PC-9 (cell line): ENCODE measurements at regions of chr19 and their contacts with region 1.

Region 1: DNA sequence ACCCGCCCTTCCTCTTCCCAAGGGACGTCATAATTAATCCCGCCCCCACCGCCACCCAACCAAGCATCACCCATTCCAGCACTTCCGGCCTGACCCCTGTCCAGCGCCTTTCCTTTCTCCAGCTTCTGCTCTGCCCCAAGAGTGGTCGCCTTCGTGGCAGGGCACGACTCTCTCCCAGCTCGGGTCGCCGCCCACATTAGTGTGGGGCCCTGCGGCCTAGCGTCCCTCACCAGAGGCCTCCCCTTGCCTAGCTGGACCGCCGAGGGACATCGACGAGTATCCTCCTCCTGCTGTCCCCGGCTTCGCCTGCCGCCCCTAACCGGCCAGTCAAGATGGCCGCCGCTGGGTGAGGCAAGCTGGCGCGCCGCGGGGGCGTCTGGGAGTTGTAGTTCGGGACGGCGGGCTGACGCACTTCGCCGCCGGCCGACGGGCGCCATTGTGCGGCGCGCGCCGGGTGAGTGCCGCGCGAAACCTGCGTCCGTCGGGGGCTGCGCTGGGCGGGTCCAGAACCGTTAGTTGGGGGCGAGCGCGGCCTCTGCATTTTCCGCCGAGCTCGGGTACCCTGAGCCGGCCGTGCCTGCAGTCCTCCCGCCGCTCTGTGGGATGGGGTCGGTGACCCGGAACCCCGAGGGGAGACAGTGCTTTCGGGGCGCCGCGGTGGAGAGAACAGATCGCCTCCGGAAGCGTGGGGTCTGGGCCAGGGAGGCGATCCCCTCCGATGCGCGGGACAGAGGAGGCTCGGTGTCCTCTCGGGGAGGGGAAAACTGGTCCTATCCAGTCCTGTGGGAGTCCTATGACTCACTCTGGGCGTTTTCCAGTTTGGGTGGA is at the start of gene ZNF274:
- DNase-seq: peak; percentile 91 to 98
- H3K4me3 ChIP-seq: peak within 1 kb of the TSS; percentile 80
- H3K27ac ChIP-seq: peak within 1 kb of the TSS; percentile 95
- H3K4me1 ChIP-seq: peaks cover 4% of the 10 kb centered on the region; the same call in 1 of the 2 replicates
- H3K27me3 ChIP-seq: no peaks in the 10 kb centered on the region
- CTCF ChIP-seq: no peak
- total RNA-seq, gene ZNF274: 34.3 and 36.4 TPM in 2 replicates

Region 2: DNA sequence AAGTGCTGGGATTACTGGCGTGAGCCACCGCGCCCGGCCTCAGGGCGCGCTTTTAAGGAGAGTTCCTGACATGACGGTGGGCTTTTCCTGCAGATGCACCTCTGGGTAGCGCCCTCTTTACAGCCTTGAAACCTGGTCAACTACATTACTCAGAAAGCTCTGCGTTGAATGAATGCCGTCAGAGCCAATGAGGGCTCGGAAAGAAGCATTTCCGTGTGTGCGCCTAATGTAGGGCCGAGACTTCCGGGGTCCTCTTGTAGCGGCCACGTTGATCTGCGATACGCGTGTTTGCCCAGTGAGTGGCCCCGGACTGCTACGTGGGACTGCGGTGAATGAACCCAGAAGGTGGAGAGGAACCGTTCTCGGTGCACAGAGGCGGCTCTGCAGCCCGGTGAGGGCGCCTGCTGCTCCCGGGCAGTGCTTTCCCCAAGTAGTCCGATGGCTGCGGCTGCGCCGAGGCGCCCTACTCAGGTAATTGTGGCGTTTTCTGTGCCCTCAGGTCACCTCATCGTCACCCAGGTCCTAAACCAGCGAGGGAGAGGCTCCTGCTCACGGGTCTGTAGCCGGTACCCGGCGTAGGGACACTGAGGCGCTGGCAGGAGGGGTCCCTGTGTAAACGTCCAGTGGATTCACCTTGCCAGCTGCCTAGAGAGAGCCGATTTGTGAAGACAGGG is 363.6 kb before region 1 on chr19:
- CTCF ChIA-PET with region 1: no interaction called
- POLR2A ChIA-PET with region 1: interaction called, 10 read pairs
- intact Hi-C with region 1: no loop called
- DNase-seq: peak; percentile 87 to 97
- H3K4me3 ChIP-seq: peak overlapping the region; percentile 82
- H3K27ac ChIP-seq: peak overlapping the region; percentile 56
- H3K4me1 ChIP-seq: peaks cover 23% of the 10 kb centered on the region
- H3K27me3 ChIP-seq: no peaks in the 10 kb centered on the region
- CTCF ChIP-seq: no peak; the same call in 1 of the 2 replicates

Region 3: GRCh38 chr19:57947208-57948134 is 235.7 kb before region 1 on chr19 and contains the start of gene ZNF256:
- CTCF ChIA-PET with region 1: no interaction called
- POLR2A ChIA-PET with region 1: no interaction called
- intact Hi-C with region 1: loop called (anchors 1 kb)
- DNase-seq: peak; percentile 86 to 96
- H3K4me3 ChIP-seq: peak within 1 kb of the TSS; percentile 91
- H3K27ac ChIP-seq: peak within 1 kb of the TSS; percentile 35; the same call in 1 of the 2 replicates
- H3K4me1 ChIP-seq: peaks cover 9% of the 10 kb centered on the region
- H3K27me3 ChIP-seq: 0 out of 2 replicates have a peak, but pooled peaks cover 4% of the 10 kb centered on the region
- CTCF ChIP-seq: peak; percentile 63
- total RNA-seq, gene ZNF256: 6.3 and 6.4 TPM in 2 replicates

Region 4: GRCh38 chr19:58097781-58098681 is 85.2 kb before region 1 on chr19 and contains the start of gene ZSCAN18:
- CTCF ChIA-PET with region 1: no interaction called
- POLR2A ChIA-PET with region 1: no interaction called
- intact Hi-C with region 1: loop called (anchors 1 kb)
- DNase-seq: peak; percentile 96 to 99
- H3K4me3 ChIP-seq: peak within 1 kb of the TSS; percentile 71
- H3K27ac ChIP-seq: no peak within 1 kb of the TSS
- H3K4me1 ChIP-seq: no peaks in the 10 kb centered on the region
- H3K27me3 ChIP-seq: no peaks in the 10 kb centered on the region
- CTCF ChIP-seq: no peak
- total RNA-seq, gene ZSCAN18: 76.3 and 90.5 TPM in 2 replicates

Region 5: DNA sequence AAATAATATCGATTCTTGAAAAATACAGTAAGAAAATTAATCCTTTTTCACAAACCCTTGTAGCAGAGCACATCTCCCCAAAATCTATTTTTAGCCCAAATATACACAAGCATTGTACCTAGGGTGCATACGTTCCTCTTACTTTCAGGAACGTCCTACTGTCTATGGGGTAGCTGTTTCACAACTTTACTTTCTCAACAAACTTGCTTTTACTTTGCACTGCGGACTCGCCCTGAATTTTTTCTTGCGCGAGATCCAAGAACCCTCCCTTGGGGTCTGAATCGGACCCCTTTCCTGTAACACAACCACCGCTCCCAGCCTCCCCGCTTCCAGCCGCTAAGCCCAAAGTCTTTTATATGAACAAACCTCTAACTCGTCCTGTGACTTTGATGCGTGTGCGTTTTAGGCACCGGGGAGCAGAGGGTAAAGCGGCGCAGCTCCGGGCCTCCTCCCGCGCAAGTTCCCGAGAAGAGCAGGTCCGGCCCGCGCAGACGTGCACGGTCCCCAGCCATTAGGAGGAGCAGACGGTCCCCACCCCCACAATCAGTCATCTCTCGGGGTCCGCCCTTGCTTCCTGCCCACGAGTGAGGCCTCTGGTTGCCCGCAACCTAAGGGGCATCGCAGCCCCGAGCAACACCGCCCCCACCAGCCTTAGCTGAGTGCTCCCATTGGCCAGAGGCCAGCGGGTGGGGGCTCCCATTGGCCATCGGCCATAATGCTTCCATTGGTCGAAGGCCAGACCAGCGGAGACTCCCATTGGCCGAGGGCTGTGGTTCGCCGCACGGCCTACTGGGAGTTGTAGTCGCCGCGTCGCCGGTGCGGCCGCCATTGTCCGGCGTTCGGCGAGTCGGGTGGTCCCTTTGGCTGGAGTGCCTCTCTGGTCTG is 95.2 kb after region 1 on chr19 and contains the start of gene ZNF8:
- CTCF ChIA-PET with region 1: no interaction called
- POLR2A ChIA-PET with region 1: no interaction called
- intact Hi-C with region 1: loop called (anchors 2 kb)
- DNase-seq: peak; percentile 92 to 97
- H3K4me3 ChIP-seq: peak within 1 kb of the TSS; percentile 79
- H3K27ac ChIP-seq: 0 out of 2 replicates have a peak within 1 kb of the TSS, but pooled peaks have one; percentile 17
- H3K4me1 ChIP-seq: peaks cover 6% of the 10 kb centered on the region; the same call in 1 of the 2 replicates
- H3K27me3 ChIP-seq: no peaks in the 10 kb centered on the region
- CTCF ChIP-seq: no peak
- total RNA-seq, gene ZNF8: 6.2 and 6.4 TPM in 2 replicates

Region 6: DNA sequence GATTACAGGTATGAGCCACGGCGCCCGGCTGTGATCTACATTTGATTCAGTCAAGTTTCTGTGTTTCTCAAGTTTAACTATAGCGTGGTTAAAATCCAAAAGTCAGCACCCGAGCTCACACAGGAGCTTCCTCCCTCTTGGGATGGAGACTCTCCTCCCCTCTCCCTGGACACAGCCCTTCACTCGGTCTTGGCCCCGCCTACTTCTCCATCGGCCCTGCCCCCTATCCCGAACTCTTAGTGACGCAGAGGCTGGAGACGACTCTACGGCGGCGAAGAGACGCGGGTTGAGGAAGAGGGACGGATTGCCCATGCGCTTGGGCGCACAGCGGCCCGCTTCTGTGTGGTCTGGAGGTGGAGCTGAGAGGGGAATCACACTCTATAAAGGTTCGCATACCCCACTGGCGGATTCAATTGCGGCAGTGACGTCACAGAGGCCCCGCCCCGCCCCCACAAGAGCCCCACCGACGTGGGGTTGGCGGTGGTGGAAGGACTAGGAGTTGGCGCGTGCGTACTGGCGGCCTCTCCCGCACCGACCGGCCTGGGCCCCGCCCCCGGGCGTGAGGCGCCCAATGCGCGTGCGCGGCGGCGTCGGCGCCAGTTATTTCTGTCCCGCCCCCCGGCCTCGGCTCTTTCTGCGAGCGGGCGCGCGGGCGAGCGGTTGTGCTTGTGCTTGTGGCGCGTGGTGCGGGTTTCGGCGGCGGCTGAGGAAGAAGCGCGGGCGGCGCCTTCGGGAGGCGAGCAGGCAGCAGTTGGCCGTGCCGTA is 360.8 kb after region 1 on chr19 and contains the start of gene TRIM28:
- CTCF ChIA-PET with region 1: no interaction called
- POLR2A ChIA-PET with region 1: no interaction called
- intact Hi-C with region 1: loop called (anchors 1 kb)
- DNase-seq: peak; percentile 90 to 98
- H3K4me3 ChIP-seq: peak within 1 kb of the TSS; percentile 76
- H3K27ac ChIP-seq: peak within 1 kb of the TSS; percentile 88
- H3K4me1 ChIP-seq: peaks cover 10% of the 10 kb centered on the region; the same call in 1 of the 2 replicates
- H3K27me3 ChIP-seq: no peaks in the 10 kb centered on the region
- CTCF ChIP-seq: no peak
- total RNA-seq, gene TRIM28: 311 and 322 TPM in 2 replicates